ENCODE measurements at regions of chr19 and their contacts with region 1.

Region 1: DNA sequence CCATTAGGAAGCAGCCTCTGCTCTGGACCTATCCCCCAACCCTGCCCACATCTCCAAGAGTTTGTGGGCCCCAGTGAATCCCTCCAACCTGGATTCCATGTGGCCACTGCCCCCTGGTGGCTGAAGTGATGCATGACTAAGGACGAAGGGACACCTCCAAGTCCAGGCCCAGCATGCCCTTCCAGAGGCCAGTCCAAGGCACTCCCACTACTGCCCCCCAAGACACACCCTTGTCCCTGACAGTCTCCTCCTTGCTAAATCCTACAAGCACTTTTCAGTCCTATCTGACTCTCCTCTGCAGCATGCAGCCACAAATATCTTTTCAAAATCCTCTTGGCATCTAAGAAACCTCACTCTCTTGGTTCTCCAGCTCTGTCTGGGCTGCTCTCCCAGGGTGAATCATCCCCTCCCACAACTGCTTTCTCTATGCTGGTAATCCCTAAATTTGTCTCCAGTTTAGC is 33.0 kb downstream of the DEDD2 start:
- DNase-seq: peak; percentile 83
- ATAC-seq: peak; percentile 85
- H3K4me3 Mint-ChIP-seq: no peak overlapping the region
- H3K27ac Mint-ChIP-seq: peak overlapping the region; percentile 36
- H3K4me1 Mint-ChIP-seq: peaks cover 21% of the 10 kb centered on the region
- H3K27me3 Mint-ChIP-seq: no peaks in the 10 kb centered on the region
- CTCF ChIP-seq: peak; percentile 96

Region 2: GRCh38 chr19:42048992-42049391 is 135.4 kb before region 1 on chr19:
- CTCF ChIA-PET with region 1: no interaction called
- POLR2A ChIA-PET with region 1: no interaction called
- intact Hi-C with region 1: no loop called
- DNase-seq: peak; percentile 27
- ATAC-seq: peak; percentile 11
- H3K4me3 Mint-ChIP-seq: peak overlapping the region; percentile 47
- H3K27ac Mint-ChIP-seq: peak overlapping the region; percentile 56
- H3K4me1 Mint-ChIP-seq: peaks cover 7% of the 10 kb centered on the region
- H3K27me3 Mint-ChIP-seq: no peaks in the 10 kb centered on the region
- CTCF ChIP-seq: no peak

Region 3: GRCh38 chr19:42113641-42114348 is 70.6 kb before region 1 on chr19:
- CTCF ChIA-PET with region 1: interaction called, 42 read pairs
- POLR2A ChIA-PET with region 1: no interaction called
- intact Hi-C with region 1: loop called (anchors 1 kb)
- DNase-seq: peak; percentile 25
- ATAC-seq: peak; percentile 38
- H3K4me3 Mint-ChIP-seq: no peak overlapping the region
- H3K27ac Mint-ChIP-seq: peak overlapping the region; percentile 87
- H3K4me1 Mint-ChIP-seq: peaks cover 48% of the 10 kb centered on the region
- H3K27me3 Mint-ChIP-seq: no peaks in the 10 kb centered on the region
- CTCF ChIP-seq: no peak

Region 4: GRCh38 chr19:42121656-42122069 is 62.8 kb before region 1 on chr19:
- CTCF ChIA-PET with region 1: interaction called, 10 read pairs
- POLR2A ChIA-PET with region 1: no interaction called
- intact Hi-C with region 1: no loop called
- DNase-seq: peak; percentile 93
- ATAC-seq: peak; percentile 69
- H3K4me3 Mint-ChIP-seq: peak overlapping the region; percentile 78
- H3K27ac Mint-ChIP-seq: peak overlapping the region; percentile 96
- H3K4me1 Mint-ChIP-seq: peaks cover 68% of the 10 kb centered on the region
- H3K27me3 Mint-ChIP-seq: no peaks in the 10 kb centered on the region
- CTCF ChIP-seq: no peak

Region 5: DNA sequence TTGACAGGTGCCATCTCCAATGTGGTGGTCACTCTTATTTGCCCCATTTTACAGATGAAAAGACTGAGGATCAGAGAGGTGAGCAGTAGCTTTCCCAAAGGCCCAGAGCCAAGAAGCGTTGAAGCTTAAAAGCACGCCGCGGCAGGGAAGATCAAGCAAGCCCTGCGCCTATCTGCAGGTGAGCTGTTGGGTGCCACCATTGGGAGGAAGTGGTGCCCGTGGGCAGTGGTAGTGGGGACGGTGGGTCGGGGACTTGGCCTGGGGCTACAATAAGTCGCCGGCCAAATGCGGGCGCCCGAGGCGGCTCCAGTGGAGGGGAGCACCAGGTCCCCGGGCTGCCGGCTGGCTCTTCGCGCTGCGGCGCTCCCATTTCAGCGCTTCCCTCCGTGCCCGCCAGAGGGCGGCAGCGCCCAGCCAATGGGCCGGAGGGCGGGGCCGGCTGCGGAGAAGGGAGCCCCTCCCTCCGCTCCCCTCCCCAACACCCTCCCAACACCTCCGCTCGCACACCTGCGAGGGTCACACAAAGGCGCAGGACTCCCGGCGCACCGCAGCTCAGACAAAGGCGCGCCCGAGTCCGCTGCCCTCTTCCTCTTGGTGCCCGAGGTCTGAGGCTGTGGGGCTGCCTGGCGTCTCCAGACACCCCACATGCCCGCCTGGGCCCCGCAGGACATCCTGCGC is 51.4 kb before region 1 on chr19:
- CTCF ChIA-PET with region 1: interaction called, 70 read pairs
- POLR2A ChIA-PET with region 1: no interaction called
- intact Hi-C with region 1: loop called (anchors 2 kb)
- DNase-seq: peak; percentile 81
- ATAC-seq: peak; percentile 74
- H3K4me3 Mint-ChIP-seq: peak overlapping the region; percentile 78
- H3K27ac Mint-ChIP-seq: peak overlapping the region; percentile 79
- H3K4me1 Mint-ChIP-seq: peaks cover 40% of the 10 kb centered on the region
- H3K27me3 Mint-ChIP-seq: no peaks in the 10 kb centered on the region
- CTCF ChIP-seq: peak; percentile 99

Region 6: DNA sequence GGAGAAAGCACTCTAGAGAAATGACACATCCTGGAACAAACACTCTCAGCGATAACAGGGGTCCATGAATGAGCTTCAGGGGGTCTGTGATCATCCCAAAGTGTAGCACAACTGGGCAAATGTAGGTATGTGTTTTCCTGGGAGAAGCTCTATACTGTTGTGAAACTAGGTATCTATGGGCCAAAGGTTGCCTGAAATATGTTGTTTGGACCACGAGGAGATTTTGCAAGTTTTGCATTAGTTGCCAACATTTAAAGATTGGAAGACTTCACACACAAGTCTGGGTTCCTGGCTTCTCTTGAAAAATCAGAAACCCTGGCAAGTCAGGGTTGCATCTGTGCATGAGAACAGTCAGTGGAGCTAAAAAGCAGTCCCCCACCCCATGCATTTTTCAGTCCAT is 25.5 kb before region 1 on chr19:
- CTCF ChIA-PET with region 1: interaction called, 10 read pairs
- POLR2A ChIA-PET with region 1: no interaction called
- intact Hi-C with region 1: no loop called
- DNase-seq: no peak
- ATAC-seq: no peak
- H3K4me3 Mint-ChIP-seq: no peak overlapping the region
- H3K27ac Mint-ChIP-seq: no peak overlapping the region
- H3K4me1 Mint-ChIP-seq: peaks cover 13% of the 10 kb centered on the region
- H3K27me3 Mint-ChIP-seq: no peaks in the 10 kb centered on the region
- CTCF ChIP-seq: no peak

Region 7: GRCh38 chr19:42199440-42200115 is 15.1 kb after region 1 on chr19:
- CTCF ChIA-PET with region 1: interaction called, 41 read pairs
- POLR2A ChIA-PET with region 1: interaction called, 6 read pairs
- intact Hi-C with region 1: no loop called
- DNase-seq: peak; percentile 84
- ATAC-seq: peak; percentile 66
- H3K4me3 Mint-ChIP-seq: peak overlapping the region; percentile 72
- H3K27ac Mint-ChIP-seq: peak overlapping the region; percentile 95
- H3K4me1 Mint-ChIP-seq: peaks cover 80% of the 10 kb centered on the region
- H3K27me3 Mint-ChIP-seq: no peaks in the 10 kb centered on the region
- CTCF ChIP-seq: peak; percentile 50

Region 8: GRCh38 chr19:42219812-42220750 is 35.6 kb after region 1 on chr19 and contains the start of gene ZNF526:
- CTCF ChIA-PET with region 1: interaction called, 12 read pairs
- POLR2A ChIA-PET with region 1: no interaction called
- intact Hi-C with region 1: no loop called
- DNase-seq: peak; percentile 98
- ATAC-seq: peak; percentile 84
- H3K4me3 Mint-ChIP-seq: peak within 1 kb of the TSS; percentile 99
- H3K27ac Mint-ChIP-seq: peak within 1 kb of the TSS; percentile 100
- H3K4me1 Mint-ChIP-seq: peaks cover 46% of the 10 kb centered on the region
- H3K27me3 Mint-ChIP-seq: no peaks in the 10 kb centered on the region
- CTCF ChIP-seq: no peak
- total RNA-seq, gene ZNF526: 12.0 to 12.3 TPM

Region 9: GRCh38 chr19:42233106-42233505 is 48.7 kb after region 1 on chr19:
- CTCF ChIA-PET with region 1: no interaction called
- POLR2A ChIA-PET with region 1: no interaction called
- intact Hi-C with region 1: no loop called
- DNase-seq: no peak
- ATAC-seq: no peak
- H3K4me3 Mint-ChIP-seq: no peak overlapping the region
- H3K27ac Mint-ChIP-seq: no peak overlapping the region
- H3K4me1 Mint-ChIP-seq: peaks cover 24% of the 10 kb centered on the region
- H3K27me3 Mint-ChIP-seq: no peaks in the 10 kb centered on the region
- CTCF ChIP-seq: no peak

Region 10: DNA sequence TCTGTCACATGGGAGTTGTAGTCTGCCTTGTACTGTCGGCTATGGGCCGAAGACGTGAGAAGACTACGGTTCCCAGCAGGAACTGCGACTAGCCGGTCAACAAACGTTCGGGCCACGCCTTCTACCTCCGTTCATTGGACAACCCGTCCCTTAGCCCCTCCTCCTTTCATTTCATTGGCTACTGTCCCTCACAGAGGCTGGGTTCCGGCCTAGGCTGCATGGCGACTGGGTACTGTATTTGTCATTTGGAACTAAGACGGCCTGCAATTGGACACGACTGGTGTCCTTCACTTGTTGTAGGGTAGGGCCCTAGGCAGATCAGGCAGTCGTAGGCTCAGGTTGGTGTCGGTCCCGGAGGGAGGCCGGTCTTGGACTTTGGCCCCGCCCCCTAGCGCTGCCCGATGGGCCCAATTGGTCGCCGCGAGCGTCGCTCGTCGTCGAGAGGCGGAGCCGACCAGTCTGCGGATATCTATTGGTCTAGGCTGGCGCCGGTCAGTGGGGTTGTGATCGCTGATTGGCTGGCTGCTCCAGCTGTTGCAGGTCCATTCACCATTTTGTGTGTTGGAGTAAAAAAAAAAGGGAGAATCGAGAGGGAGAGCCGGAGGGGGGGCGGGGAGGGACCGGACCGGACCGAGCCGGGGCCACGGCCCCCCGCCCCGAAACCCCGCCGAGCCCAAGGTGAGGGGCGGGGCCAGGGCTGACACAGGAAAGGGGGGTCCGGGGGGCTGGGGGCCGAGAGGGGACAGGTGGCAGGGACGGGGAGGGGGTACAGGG is 84.5 kb after region 1 on chr19 and contains the start of gene CIC:
- CTCF ChIA-PET with region 1: no interaction called
- POLR2A ChIA-PET with region 1: no interaction called
- intact Hi-C with region 1: no loop called
- DNase-seq: peak; percentile 99
- ATAC-seq: peak; percentile 80
- H3K4me3 Mint-ChIP-seq: no peak within 1 kb of the TSS
- H3K27ac Mint-ChIP-seq: peak within 1 kb of the TSS; percentile 99
- H3K4me1 Mint-ChIP-seq: peaks cover 26% of the 10 kb centered on the region
- H3K27me3 Mint-ChIP-seq: no peaks in the 10 kb centered on the region
- CTCF ChIP-seq: no peak
- total RNA-seq, gene CIC: 60.7 to 65.6 TPM

Measured in activated CD8-positive, alpha-beta T cell treated with anti-CD3 and anti-CD28 coated beads for 36 hours (primary cell).